B cell (primary cell): ENCODE measurements at regions of chr11 and their contacts with region 1.

Region 1: GRCh38 chr11:93662177-93662575 is 694 bp downstream of the CEP295 start:
- DNase-seq: no peak
- ATAC-seq: no peak
- H3K4me3 ChIP-seq: peak overlapping the region; percentile 81 to 100 (median 97)
- H3K4me3 Mint-ChIP-seq: peak overlapping the region; percentile 85
- H3K27ac ChIP-seq: peak overlapping the region; percentile 87 to 91
- H3K27ac Mint-ChIP-seq: peak overlapping the region; percentile 77
- H3K4me1 ChIP-seq: peaks cover 7 to 16% of the 10 kb centered on the region in 2 donors
- H3K4me1 Mint-ChIP-seq: peaks cover 19% of the 10 kb centered on the region
- H3K27me3 ChIP-seq: no peaks in the 10 kb centered on the region
- H3K27me3 Mint-ChIP-seq: no peaks in the 10 kb centered on the region
- CTCF ChIP-seq: no peak

Region 2: DNA sequence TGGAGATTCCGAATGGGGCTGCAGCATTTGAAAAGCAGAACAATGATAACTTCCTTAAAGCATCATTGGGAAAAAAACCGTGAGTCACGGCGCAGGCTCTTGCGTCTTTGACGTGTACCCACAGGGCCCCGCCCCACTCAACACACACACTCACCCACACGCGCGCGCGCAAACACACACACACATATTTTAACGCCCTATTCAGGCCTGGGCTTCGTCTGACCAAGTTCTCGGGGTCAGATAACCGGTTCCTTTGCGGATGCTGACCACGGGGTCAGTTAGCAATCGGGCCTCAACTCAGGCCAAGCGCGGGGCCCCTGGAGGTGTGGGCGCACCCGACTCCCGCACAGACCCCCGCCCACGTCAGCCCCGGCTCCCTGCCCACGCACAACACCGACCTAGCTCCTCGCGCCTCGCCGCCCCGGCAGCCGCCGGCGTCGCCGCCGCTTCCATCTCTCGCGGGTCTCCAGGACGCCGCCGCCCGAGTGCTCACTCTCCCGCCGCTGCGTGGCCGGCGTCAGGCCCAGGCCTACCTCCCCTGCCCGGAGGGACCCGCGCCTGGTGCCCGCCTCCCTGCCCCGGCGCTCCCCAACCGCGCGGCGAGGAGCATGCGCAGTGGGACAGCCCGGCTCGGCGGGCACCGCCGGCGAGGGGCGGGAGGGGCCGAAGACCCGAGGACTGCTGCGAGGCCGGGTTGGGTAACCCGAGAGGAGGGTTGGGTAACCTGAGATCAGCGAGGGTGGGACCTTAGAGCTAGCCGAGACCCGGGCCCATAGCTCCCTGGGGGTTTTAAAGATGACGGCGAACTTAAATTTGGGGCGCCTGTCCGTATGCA is 464.6 kb before region 1 on chr11 and contains the start of gene SLC36A4:
- CTCF ChIA-PET with region 1: no interaction called
- POLR2A ChIA-PET with region 1: interaction called, 3 read pairs
- intact Hi-C with region 1: loop called (anchors 2 kb)
- DNase-seq: peak; percentile 94
- ATAC-seq: peak; percentile 85
- H3K4me3 ChIP-seq: peak within 1 kb of the TSS; percentile 67 to 99 (median 77)
- H3K4me3 Mint-ChIP-seq: peak within 1 kb of the TSS; percentile 96
- H3K27ac ChIP-seq: peak within 1 kb of the TSS; percentile 90 to 97
- H3K27ac Mint-ChIP-seq: peak within 1 kb of the TSS; percentile 96
- H3K4me1 ChIP-seq: peaks cover 7% of the 10 kb centered on the region in 2 donors
- H3K4me1 Mint-ChIP-seq: peaks cover 18% of the 10 kb centered on the region
- H3K27me3 ChIP-seq: peaks cover 0 to 7% (median 0%) of the 10 kb centered on the region in 4 experiments
- H3K27me3 Mint-ChIP-seq: peaks cover 10% of the 10 kb centered on the region
- CTCF ChIP-seq: no peak
- total RNA-seq, gene SLC36A4: 27.5 and 28.2 TPM in 2 replicates

Region 3: GRCh38 chr11:93718057-93718563 is 55.9 kb after region 1 on chr11:
- CTCF ChIA-PET with region 1: interaction called, 3 read pairs
- POLR2A ChIA-PET with region 1: no interaction called
- intact Hi-C with region 1: loop called (anchors 5 kb)
- DNase-seq: peak; percentile 88
- ATAC-seq: peak; percentile 95
- H3K4me3 ChIP-seq: peak overlapping the region in 3 of 5 experiments; percentile 1 to 43 (median 21)
- H3K4me3 Mint-ChIP-seq: peak overlapping the region; percentile 61
- H3K27ac ChIP-seq: peak overlapping the region; percentile 81 to 92
- H3K27ac Mint-ChIP-seq: peak overlapping the region; percentile 86
- H3K4me1 ChIP-seq: peaks cover 26 to 27% of the 10 kb centered on the region in 2 donors
- H3K4me1 Mint-ChIP-seq: peaks cover 36% of the 10 kb centered on the region
- H3K27me3 ChIP-seq: no peaks in the 10 kb centered on the region
- H3K27me3 Mint-ChIP-seq: no peaks in the 10 kb centered on the region
- CTCF ChIP-seq: no peak

Region 4: DNA sequence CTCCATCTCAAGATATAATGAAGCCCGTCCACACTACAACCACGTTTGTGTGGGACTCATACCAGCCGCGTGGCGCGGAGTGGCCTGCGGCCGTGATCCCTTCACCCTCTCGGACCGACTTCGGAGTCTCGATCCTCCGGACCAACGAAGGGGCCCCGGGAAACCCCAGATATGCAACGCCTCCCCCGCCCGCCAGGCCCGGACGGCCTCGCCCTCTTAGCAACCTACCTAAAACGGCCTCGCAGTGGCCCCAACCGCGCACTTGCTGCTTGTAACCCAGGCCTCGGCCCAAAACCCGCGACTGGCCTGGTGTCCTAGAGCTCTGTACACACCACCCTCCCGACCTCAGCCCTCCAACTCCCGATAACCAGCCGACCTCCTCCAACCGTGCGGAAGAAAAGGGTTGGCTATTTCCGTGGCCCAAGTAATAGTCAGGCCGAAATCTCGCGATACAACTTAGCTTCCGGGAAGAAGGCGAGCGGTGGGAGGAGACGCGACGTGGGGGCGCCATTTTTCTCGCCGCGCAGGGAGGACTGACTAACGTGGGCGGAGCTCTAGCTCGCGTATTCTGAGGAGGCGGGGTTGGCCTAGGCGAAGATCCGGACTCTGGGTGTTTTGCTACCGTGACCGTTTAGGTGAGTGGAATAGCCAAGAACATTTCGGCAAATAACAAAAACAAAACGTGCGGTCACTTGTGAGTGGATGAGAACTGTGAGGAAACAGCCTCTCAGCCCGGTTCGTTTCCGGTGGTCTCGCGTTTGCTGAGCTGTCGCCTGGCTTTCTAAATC is 79.1 kb after region 1 on chr11 and contains the starts of genes C11orf54 and TAF1D:
- CTCF ChIA-PET with region 1: interaction called, 6 read pairs
- POLR2A ChIA-PET with region 1: interaction called, 18 read pairs
- intact Hi-C with region 1: loop called (anchors 1 kb)
- DNase-seq: peak; percentile 99
- ATAC-seq: peak; percentile 95
- H3K4me3 ChIP-seq: peak within 1 kb of the TSS; percentile 73 to 98 (median 92)
- H3K4me3 Mint-ChIP-seq: peak within 1 kb of the TSS; percentile 98
- H3K27ac ChIP-seq: peak within 1 kb of the TSS; percentile 90 to 96
- H3K27ac Mint-ChIP-seq: peak within 1 kb of the TSS; percentile 98
- H3K4me1 ChIP-seq: peaks cover 36 to 39% of the 10 kb centered on the region in 2 donors
- H3K4me1 Mint-ChIP-seq: peaks cover 63% of the 10 kb centered on the region
- H3K27me3 ChIP-seq: no peaks in the 10 kb centered on the region
- H3K27me3 Mint-ChIP-seq: no peaks in the 10 kb centered on the region
- CTCF ChIP-seq: no peak
- total RNA-seq, gene C11orf54: 38.9 and 40.3 TPM in 2 replicates
- total RNA-seq, gene TAF1D: 230 and 235 TPM in 2 replicates

Region 5: GRCh38 chr11:94973099-94973968 is 1311.2 kb after region 1 on chr11 and contains the starts of genes CWC15 and KDM4D:
- CTCF ChIA-PET with region 1: interaction called, 3 read pairs
- POLR2A ChIA-PET with region 1: no interaction called
- intact Hi-C with region 1: loop called (anchors 5 kb)
- DNase-seq: peak; percentile 94
- ATAC-seq: peak; percentile 100
- H3K4me3 ChIP-seq: peak within 1 kb of the TSS; percentile 75 to 97 (median 87)
- H3K4me3 Mint-ChIP-seq: peak within 1 kb of the TSS; percentile 92
- H3K27ac ChIP-seq: peak within 1 kb of the TSS; percentile 74 to 83
- H3K27ac Mint-ChIP-seq: peak within 1 kb of the TSS; percentile 94
- H3K4me1 ChIP-seq: peaks cover 10 to 14% of the 10 kb centered on the region in 2 donors
- H3K4me1 Mint-ChIP-seq: peaks cover 13% of the 10 kb centered on the region
- H3K27me3 ChIP-seq: no peaks in the 10 kb centered on the region
- H3K27me3 Mint-ChIP-seq: no peaks in the 10 kb centered on the region
- CTCF ChIP-seq: no peak
- total RNA-seq, gene CWC15: 59.5 and 59.8 TPM in 2 replicates
- total RNA-seq, gene KDM4D: 0.44 and 0.73 TPM in 2 replicates